ENCODE measurements at regions of chr15 and their contacts with region 1.

Region 1: GRCh38 chr15:70722266-70723121 is 40.9 kb downstream of the UACA start:
- DNase-seq: no peak
- ATAC-seq: 0 out of 3 replicates have a peak, but pooled peaks have one; percentile 19
- H3K4me3 ChIP-seq: no peak overlapping the region
- H3K27ac ChIP-seq: no peak overlapping the region
- H3K4me1 ChIP-seq: no peaks in the 10 kb centered on the region
- H3K27me3 ChIP-seq: no peaks in the 10 kb centered on the region
- CTCF ChIP-seq: peak; percentile 46 to 61 (median 58); a peak in 5 of 6 replicates
- EP300 ChIP-seq: no peak
- POLR2A ChIP-seq: no peak
- RAD21 ChIP-seq: peak; percentile 57

Region 2: DNA sequence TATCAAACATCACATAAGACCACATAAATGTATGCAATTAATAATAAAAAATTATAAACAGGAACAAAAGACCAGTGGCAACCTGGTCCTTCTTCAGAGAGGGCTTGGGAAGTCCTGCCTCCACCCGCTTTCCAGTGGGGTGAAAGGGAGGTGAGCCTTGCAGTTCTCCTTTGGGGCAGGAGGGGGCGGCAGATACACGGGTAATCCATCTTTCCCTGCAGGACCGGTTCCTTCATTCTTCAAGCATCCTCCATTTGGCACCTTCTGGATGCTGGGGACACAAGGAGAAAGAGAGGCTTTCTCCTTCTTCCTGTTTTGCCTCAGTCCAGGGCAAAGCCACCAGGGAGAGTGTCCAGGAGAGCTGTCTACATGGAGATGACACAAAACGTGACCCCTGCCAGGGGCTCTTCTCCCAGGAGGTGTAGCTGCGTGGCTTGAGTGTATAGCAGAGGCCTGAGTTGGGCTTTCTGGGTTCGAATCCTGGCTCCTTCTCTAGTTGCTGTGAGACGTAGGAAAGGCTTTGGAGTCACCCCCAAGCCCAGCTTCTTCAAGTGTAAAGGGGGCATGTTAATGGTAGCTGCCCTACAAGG is 1246.6 kb before region 1 on chr15:
- CTCF ChIA-PET with region 1: interaction called, 10 read pairs
- POLR2A ChIA-PET with region 1: no interaction called
- RAD21 ChIA-PET with region 1: interaction called, 11 read pairs
- SMC1A ChIA-PET with region 1: interaction called, 5 read pairs
- in situ Hi-C with region 1: loop called (anchors 10 kb)
- intact Hi-C with region 1: loop called (anchors 10 kb)
- DNase-seq: no peak
- ATAC-seq: peak; percentile 89
- H3K4me3 ChIP-seq: no peak overlapping the region
- H3K27ac ChIP-seq: no peak overlapping the region
- H3K4me1 ChIP-seq: no peaks in the 10 kb centered on the region
- H3K27me3 ChIP-seq: no peaks in the 10 kb centered on the region
- CTCF ChIP-seq: peak; percentile 95 to 97 (median 97); a peak in 5 of 6 replicates
- EP300 ChIP-seq: no peak
- POLR2A ChIP-seq: no peak
- RAD21 ChIP-seq: peak; percentile 91

Region 3: GRCh38 chr15:70569091-70569621 is 153.3 kb before region 1 on chr15:
- CTCF ChIA-PET with region 1: interaction called, 18 read pairs
- POLR2A ChIA-PET with region 1: no interaction called
- RAD21 ChIA-PET with region 1: interaction called, 14 read pairs
- SMC1A ChIA-PET with region 1: interaction called, 17 read pairs
- in situ Hi-C with region 1: no loop called
- intact Hi-C with region 1: loop called (anchors 10 kb)
- DNase-seq: no peak
- ATAC-seq: 0 out of 3 replicates have a peak, but pooled peaks have one; percentile 33
- H3K4me3 ChIP-seq: no peak overlapping the region
- H3K27ac ChIP-seq: no peak overlapping the region
- H3K4me1 ChIP-seq: no peaks in the 10 kb centered on the region
- H3K27me3 ChIP-seq: peaks cover 0 to under 1% of the 10 kb centered on the region in 2 experiments; a peak in 2 of 4 replicates
- CTCF ChIP-seq: peak; percentile 20 to 47 (median 38); a peak in 4 of 6 replicates
- EP300 ChIP-seq: no peak
- POLR2A ChIP-seq: no peak
- RAD21 ChIP-seq: peak; percentile 48

Region 4: GRCh38 chr15:70670680-70671079 is 51.8 kb before region 1 on chr15:
- CTCF ChIA-PET with region 1: interaction called, 13 read pairs
- POLR2A ChIA-PET with region 1: no interaction called
- RAD21 ChIA-PET with region 1: interaction called, 4 read pairs
- SMC1A ChIA-PET with region 1: interaction called, 4 read pairs
- in situ Hi-C with region 1: no loop called
- intact Hi-C with region 1: loop called (anchors 10 kb)
- DNase-seq: no peak
- ATAC-seq: no peak
- H3K4me3 ChIP-seq: no peak overlapping the region
- H3K27ac ChIP-seq: no peak overlapping the region
- H3K4me1 ChIP-seq: peaks cover 31% of the 10 kb centered on the region
- H3K27me3 ChIP-seq: no peaks in the 10 kb centered on the region
- CTCF ChIP-seq: no peak; a peak in 1 of 6 replicates
- EP300 ChIP-seq: no peak
- POLR2A ChIP-seq: no peak
- RAD21 ChIP-seq: no peak

Region 5: GRCh38 chr15:70679919-70680231 is 42.6 kb before region 1 on chr15:
- CTCF ChIA-PET with region 1: interaction called, 13 read pairs
- POLR2A ChIA-PET with region 1: no interaction called
- RAD21 ChIA-PET with region 1: interaction called, 7 read pairs
- SMC1A ChIA-PET with region 1: interaction called, 10 read pairs
- in situ Hi-C with region 1: no loop called
- intact Hi-C with region 1: loop called (anchors 10 kb)
- DNase-seq: no peak
- ATAC-seq: no peak
- H3K4me3 ChIP-seq: no peak overlapping the region
- H3K27ac ChIP-seq: no peak overlapping the region
- H3K4me1 ChIP-seq: no peaks in the 10 kb centered on the region
- H3K27me3 ChIP-seq: no peaks in the 10 kb centered on the region; a peak in 1 of 4 replicates
- CTCF ChIP-seq: no peak
- EP300 ChIP-seq: no peak
- POLR2A ChIP-seq: no peak
- RAD21 ChIP-seq: no peak

Region 6: GRCh38 chr15:70748281-70748747 is 25.8 kb after region 1 on chr15:
- CTCF ChIA-PET with region 1: interaction called, 20 read pairs
- POLR2A ChIA-PET with region 1: no interaction called
- RAD21 ChIA-PET with region 1: no interaction called
- SMC1A ChIA-PET with region 1: no interaction called
- in situ Hi-C with region 1: no loop called
- intact Hi-C with region 1: no loop called
- DNase-seq: no peak
- ATAC-seq: no peak
- H3K4me3 ChIP-seq: no peak overlapping the region
- H3K27ac ChIP-seq: no peak overlapping the region
- H3K4me1 ChIP-seq: no peaks in the 10 kb centered on the region
- H3K27me3 ChIP-seq: no peaks in the 10 kb centered on the region
- CTCF ChIP-seq: no peak
- EP300 ChIP-seq: no peak
- POLR2A ChIP-seq: no peak
- RAD21 ChIP-seq: no peak

Measured in GM12878 (cell line).